ENCODE measurements at regions of chrX and their contacts with region 1.

Region 1: DNA sequence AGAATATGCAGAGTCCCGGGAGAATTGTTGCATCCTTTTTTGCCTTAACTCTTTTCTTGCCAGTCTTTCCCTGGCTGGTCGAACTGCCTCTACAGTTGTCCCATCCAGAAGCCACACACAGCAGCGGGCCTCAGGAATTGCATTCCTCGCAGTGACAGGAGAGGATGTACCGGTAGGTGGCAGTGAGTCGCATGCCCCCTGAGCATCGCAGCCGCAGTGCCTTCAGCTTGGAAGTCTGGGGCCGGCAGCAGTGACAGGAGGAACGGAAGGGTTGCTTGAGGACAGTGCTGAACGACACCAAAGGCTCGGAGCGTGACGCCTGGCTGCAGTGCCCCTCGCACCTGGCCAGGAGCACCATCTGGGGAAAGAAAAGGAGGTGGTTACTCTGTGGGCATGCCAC is 23.5 kb downstream of the NDP start:
- DNase-seq: peak; percentile 22
- H3K4me3 ChIP-seq: no peak overlapping the region
- H3K27ac ChIP-seq: no peak overlapping the region
- H3K4me1 ChIP-seq: no peaks in the 10 kb centered on the region
- H3K27me3 ChIP-seq: no peaks in the 10 kb centered on the region
- CTCF ChIP-seq: peak in 4 of 5 experiments; percentile 19 to 33 (median 30)
- EP300 ChIP-seq: no peak
- POLR2A ChIP-seq: no peak

Region 2: GRCh38 chrX:43718546-43719320 is 230.9 kb before region 1 on chrX:
- in situ Hi-C with region 1: no loop called
- intact Hi-C with region 1: no loop called
- DNase-seq: no peak
- H3K4me3 ChIP-seq: no peak overlapping the region
- H3K27ac ChIP-seq: no peak overlapping the region
- H3K4me1 ChIP-seq: no peaks in the 10 kb centered on the region
- H3K27me3 ChIP-seq: no peaks in the 10 kb centered on the region
- CTCF ChIP-seq: no peak
- EP300 ChIP-seq: no peak
- POLR2A ChIP-seq: no peak

Region 3: GRCh38 chrX:43836435-43837184 is 113.1 kb before region 1 on chrX:
- in situ Hi-C with region 1: loop called in 1 of 4 experiments (anchors 25 kb)
- intact Hi-C with region 1: no loop called
- DNase-seq: no peak
- H3K4me3 ChIP-seq: no peak overlapping the region
- H3K27ac ChIP-seq: no peak overlapping the region
- H3K4me1 ChIP-seq: no peaks in the 10 kb centered on the region
- H3K27me3 ChIP-seq: no peaks in the 10 kb centered on the region
- CTCF ChIP-seq: peak; percentile 32 to 72 (median 48)
- EP300 ChIP-seq: no peak
- POLR2A ChIP-seq: no peak

Region 4: DNA sequence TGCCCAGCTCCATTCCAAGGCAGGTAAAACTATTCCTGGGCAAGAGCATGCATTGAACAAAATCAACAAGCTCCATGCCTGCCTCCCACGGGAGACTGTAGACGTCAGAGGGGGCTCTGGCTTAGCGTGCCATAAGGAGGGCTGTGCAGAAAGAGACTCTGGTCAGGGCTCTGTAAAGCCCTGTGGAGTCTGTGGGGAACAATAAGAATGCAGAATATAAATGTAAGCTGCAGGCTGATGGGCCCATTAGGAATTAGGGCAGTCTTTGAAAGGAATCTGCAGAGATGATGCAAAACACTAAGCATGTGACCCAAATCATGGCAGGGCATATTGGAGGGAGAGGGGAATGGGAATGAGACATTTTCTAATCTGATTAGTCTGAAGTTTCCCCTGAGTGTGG is 223.6 kb after region 1 on chrX:
- in situ Hi-C with region 1: no loop called
- intact Hi-C with region 1: no loop called
- DNase-seq: no peak
- H3K4me3 ChIP-seq: no peak overlapping the region
- H3K27ac ChIP-seq: no peak overlapping the region
- H3K4me1 ChIP-seq: no peaks in the 10 kb centered on the region
- H3K27me3 ChIP-seq: no peaks in the 10 kb centered on the region
- CTCF ChIP-seq: no peak
- EP300 ChIP-seq: no peak
- POLR2A ChIP-seq: no peak